ENCODE measurements at regions of chr1 and their contacts with region 1.

Region 1: GRCh38 chr1:114152508-114153260 is 985 bp downstream of the SYT6 start:
- ATAC-seq: peak; percentile 69 to 93 (median 76)
- H3K4me3 ChIP-seq: peak overlapping the region; percentile 40 to 61 (median 52)
- H3K27ac ChIP-seq: no peak overlapping the region
- H3K4me1 ChIP-seq: peaks cover 20 to 28% of the 10 kb centered on the region in 2 donors

Region 2: GRCh38 chr1:114062477-114063099 is 90.1 kb before region 1 on chr1:
- in situ Hi-C with region 1: loop called in 1 of 9 experiments (anchors 25 kb)
- ATAC-seq: peak in 3 of 8 experiments; percentile 29 to 79 (median 57)
- H3K4me3 ChIP-seq: no peak overlapping the region
- H3K27ac ChIP-seq: no peak overlapping the region
- H3K4me1 ChIP-seq: peaks cover 14 to 30% of the 10 kb centered on the region in 2 donors